HEK293 (cell line): ENCODE measurements at regions of chr2 and their contacts with region 1.

Region 1: GRCh38 chr2:201231781-201232466 is 28.4 kb upstream of the CASP8 start:
- H3K4me3 ChIP-seq: no peak overlapping the region
- H3K27ac ChIP-seq: no peak overlapping the region
- H3K4me1 ChIP-seq: no peaks in the 10 kb centered on the region
- CTCF ChIP-seq: peak; percentile 95

Region 2: DNA sequence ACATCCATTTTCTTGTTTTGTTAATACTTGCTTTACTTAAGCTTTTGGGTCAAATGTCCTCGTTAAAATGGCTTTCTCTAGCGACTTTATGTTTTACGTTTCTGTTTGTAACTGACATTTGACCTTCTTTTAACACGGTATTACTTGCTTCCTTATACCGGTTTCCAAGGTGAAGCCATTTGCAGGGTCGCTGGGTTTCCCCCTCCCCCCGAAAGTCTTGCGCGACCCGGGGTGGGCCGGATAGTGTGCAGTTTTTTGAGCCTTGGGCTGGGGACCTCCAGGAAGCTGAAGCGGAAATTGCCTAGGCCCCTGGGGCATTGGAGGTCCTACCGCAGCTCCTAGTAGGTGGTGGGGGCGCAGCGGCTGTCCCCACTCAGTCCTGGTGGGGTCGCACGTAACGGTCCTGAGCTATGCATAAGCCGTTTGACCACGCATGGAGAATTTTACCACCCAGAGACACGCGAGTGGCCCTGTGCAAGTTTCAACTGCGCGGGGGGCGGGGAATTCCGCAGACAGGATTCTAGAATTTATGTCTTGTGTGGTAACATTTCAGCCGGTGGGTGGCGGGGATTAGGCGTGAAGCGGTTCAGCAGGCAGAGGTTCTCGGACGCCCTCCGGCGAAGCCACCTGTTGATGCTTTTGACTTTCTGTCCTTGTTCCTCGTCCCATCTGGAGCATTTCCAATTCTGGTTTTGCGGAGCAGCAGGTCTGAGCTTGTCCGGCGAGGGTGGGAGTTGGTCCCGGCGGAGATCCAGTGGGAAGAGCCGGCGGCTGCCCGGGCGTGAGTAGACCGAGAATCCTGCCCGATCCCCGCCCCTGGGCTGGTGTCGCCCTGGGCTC is 113.6 kb before region 1 on chr2:
- CTCF ChIA-PET with region 1: interaction called, 10 read pairs
- POLR2A ChIA-PET with region 1: no interaction called
- H3K4me3 ChIP-seq: peak overlapping the region; percentile 40
- H3K27ac ChIP-seq: peak overlapping the region; percentile 95
- H3K4me1 ChIP-seq: peaks cover 5% of the 10 kb centered on the region; the same call in 1 of the 2 replicates
- CTCF ChIP-seq: peak; percentile 94

Region 3: DNA sequence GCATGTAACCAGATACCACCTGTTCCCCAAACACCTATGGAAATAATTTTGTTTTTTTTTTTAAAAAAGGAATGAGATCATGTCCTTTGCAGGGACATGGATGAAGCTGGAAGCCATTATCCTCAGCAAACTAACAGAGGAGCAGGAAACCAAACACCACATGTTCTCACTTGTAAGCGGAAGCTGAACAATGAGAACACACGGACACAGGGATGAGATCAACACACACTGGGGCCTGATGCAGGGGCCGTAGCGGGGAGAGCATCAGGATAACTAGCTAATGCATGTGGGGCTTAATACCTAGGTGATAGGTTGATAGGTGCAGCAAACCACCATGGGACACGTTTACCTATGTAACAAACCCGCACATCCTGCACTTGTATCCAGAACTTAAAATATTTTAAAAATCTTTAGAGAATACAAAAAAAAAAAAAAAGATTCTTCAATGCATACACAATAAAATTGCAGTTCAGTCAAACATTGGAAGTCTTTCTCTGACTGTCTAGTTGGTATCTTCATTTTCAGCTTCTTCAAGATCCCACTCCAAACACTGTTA is 60.6 kb before region 1 on chr2:
- CTCF ChIA-PET with region 1: interaction called, 24 read pairs
- POLR2A ChIA-PET with region 1: no interaction called
- H3K4me3 ChIP-seq: no peak overlapping the region
- H3K27ac ChIP-seq: no peak overlapping the region
- H3K4me1 ChIP-seq: no peaks in the 10 kb centered on the region
- CTCF ChIP-seq: no peak

Region 4: DNA sequence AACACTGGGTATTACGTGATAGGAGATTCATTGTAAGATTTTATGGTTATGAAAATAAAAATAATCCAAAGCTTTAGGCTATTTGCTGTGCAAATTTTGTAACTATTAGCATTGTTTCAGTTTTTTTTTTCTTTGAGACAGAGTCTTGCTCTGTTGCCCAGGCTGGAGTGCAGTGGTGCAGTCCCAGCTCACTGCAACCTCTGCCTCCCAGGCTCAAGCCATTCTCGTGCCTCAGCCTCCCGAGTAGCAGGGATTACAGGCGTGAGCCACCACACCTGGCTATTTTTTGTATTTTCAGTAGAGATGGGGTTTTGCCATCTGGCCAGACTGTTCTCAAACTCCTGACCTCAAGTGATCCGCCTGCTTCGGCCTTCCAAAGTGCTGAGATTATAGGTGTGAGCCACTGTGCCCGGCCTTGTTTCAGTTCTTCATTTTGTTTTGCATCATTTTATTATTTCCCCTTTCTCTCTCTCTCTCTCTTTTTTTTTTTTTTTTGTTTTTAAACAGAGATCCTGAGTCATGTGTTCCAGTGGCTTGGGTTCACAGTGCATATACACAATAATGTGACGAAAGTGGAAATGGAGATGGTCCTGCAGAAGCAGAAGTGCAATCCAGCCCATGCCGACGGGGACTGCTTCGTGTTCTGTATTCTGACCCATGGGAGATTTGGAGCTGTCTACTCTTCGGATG is 23.2 kb before region 1 on chr2:
- CTCF ChIA-PET with region 1: interaction called, 10 read pairs
- POLR2A ChIA-PET with region 1: no interaction called
- H3K4me3 ChIP-seq: no peak overlapping the region
- H3K27ac ChIP-seq: no peak overlapping the region
- H3K4me1 ChIP-seq: peaks cover 2% of the 10 kb centered on the region; the same call in 1 of the 2 replicates
- CTCF ChIP-seq: no peak

Region 5: GRCh38 chr2:201363857-201364560 is 132.1 kb after region 1 on chr2:
- CTCF ChIA-PET with region 1: interaction called, 21 read pairs
- POLR2A ChIA-PET with region 1: no interaction called
- H3K4me3 ChIP-seq: no peak overlapping the region
- H3K27ac ChIP-seq: no peak overlapping the region
- H3K4me1 ChIP-seq: no peaks in the 10 kb centered on the region
- CTCF ChIP-seq: peak; percentile 30